ENCODE measurements at regions of chr10 and their contacts with region 1.

Region 1: DNA sequence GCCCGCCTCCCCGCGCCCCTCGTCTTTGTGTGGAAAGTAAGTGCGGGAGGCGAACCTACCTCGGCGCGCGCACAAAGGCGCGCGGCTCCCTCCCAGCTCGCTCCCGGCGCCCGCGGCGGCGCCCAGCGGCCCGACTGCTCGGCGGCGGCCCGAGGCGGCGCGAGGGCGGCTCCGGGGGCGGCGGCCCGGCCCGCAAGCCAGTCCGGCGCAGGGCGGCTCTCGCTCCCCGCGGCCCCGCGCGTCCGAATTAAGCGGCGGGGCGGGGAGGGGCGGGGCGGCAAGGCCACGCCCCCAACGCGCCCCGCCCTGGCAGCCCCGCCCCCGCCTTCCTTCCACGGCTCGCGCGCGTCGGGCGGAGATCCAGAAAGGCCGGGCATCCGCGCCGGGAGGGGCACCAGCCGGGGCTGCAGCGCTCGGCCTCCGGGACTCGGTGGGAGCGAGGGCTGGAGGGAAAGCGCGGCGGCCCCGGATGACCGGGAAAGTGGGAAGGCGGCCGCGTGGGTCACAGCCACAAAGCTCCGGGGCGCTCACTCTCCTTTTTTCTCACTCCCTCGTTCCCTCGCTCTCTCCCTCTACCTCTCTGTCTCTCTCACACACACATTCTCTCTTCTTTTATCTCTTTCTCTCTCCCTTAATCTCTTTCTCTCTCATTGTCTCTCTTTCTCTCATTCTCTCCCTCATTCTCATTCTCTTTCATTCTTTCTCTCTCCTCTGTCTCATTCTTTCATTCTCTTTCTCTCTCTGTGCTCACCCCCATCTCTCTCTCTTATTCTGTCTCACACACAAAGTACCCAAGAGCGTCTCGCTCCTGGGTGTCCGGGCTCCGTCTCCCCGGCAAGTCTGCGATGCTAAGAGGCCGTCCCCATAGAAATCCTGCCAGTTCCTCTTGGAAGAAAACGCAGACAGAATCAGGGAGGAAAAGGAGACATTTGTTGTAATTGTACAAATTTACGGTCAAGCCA is 170.2 kb downstream of the FAM107B start:
- DNase-seq: peak; percentile 69
- ATAC-seq: peak; percentile 59
- H3K4me3 ChIP-seq: peak overlapping the region; percentile 79
- H3K27ac ChIP-seq: peak overlapping the region; percentile 91
- H3K4me1 ChIP-seq: peaks cover 15% of the 10 kb centered on the region
- H3K27me3 ChIP-seq: no peaks in the 10 kb centered on the region
- CTCF ChIP-seq: no peak

Region 2: GRCh38 chr10:14554491-14555205 is 49.8 kb before region 1 on chr10:
- CTCF ChIA-PET with region 1: no interaction called
- POLR2A ChIA-PET with region 1: interaction called, 13 read pairs
- intact Hi-C with region 1: no loop called
- DNase-seq: peak; percentile 55
- ATAC-seq: peak; percentile 29
- H3K4me3 ChIP-seq: peak overlapping the region; percentile 39; the same call in 1 of the 2 replicates
- H3K27ac ChIP-seq: peak overlapping the region; percentile 93
- H3K4me1 ChIP-seq: peaks cover 51% of the 10 kb centered on the region
- H3K27me3 ChIP-seq: no peaks in the 10 kb centered on the region
- CTCF ChIP-seq: no peak

Region 3: DNA sequence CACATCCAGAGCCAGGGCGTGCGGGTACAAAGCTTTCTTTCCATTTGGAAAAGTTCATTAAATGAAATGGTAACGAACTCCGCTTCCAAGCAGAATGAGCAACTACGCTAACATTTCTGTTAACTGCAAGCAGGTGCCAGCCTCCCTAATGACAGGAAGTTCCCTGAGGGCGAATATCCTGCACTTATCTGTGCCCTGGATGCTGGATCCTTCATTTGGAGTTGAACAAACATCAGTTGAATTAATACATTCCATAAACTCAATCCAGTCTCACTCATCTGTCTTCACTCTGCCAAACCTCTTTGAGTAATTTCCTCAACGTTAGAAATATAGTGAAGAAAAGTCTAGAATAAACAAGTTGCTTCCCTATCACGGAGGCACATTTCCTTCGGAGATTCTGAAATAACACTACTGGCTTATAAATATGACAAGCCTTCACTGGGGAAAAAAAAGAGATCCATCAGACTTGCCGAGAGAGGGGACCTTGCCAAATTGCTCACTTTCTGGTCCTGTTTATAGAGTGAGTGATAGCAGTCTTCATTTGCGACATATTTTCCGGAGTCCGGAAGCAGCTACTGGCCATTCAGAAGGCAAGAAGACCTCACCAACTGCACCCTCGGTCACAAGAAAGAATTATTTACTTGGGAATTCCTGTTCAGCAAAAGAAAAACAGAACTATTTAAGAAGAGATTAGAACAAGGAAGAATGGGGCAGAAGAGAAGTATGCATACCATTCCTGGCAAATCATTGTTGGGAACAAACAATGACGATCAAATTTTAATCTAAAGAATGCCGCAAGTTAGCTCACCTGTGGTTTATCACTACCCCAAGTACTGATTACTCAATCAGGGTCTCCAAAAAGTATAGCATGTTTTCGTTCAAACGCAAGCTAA is 26.2 kb before region 1 on chr10:
- CTCF ChIA-PET with region 1: no interaction called
- POLR2A ChIA-PET with region 1: no interaction called
- intact Hi-C with region 1: loop called (anchors 2 kb)
- DNase-seq: peak; percentile 83
- ATAC-seq: peak; percentile 68
- H3K4me3 ChIP-seq: peak overlapping the region; percentile 54
- H3K27ac ChIP-seq: peak overlapping the region; percentile 94
- H3K4me1 ChIP-seq: peaks cover 53% of the 10 kb centered on the region
- H3K27me3 ChIP-seq: no peaks in the 10 kb centered on the region
- CTCF ChIP-seq: no peak

Region 4: DNA sequence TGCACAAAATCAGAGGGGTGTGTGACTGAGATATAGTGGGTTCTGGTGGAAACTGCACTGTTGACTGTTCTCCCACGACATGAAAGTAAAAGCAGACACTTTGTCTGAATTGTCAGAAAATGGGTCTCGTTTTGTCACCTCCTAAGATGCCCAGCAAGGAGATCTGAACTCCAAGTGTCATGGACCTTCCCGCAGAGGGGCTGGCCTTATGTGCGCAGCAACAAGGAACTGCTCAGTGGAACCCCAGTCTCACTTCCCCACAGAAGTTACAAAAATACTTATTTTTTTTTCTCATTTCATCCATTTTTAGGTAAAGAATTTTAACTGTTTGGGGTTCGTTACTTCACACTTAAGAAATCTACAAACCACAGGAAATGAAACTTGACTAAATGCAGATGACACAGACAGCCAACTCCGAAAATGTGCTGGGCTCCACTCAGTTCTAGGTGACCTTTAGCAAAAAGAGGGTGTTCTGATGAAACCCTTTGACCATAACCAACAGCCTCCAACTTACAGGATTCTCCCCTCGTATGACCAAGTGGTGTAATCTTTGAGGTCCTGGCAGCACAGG is 55.2 kb after region 1 on chr10:
- CTCF ChIA-PET with region 1: no interaction called
- POLR2A ChIA-PET with region 1: no interaction called
- intact Hi-C with region 1: loop called (anchors 1 kb)
- DNase-seq: no peak
- ATAC-seq: no peak
- H3K4me3 ChIP-seq: no peak overlapping the region
- H3K27ac ChIP-seq: peak overlapping the region; percentile 97
- H3K4me1 ChIP-seq: peaks cover 26% of the 10 kb centered on the region
- H3K27me3 ChIP-seq: no peaks in the 10 kb centered on the region
- CTCF ChIP-seq: no peak

Region 5: GRCh38 chr10:14822879-14823755 is 218.7 kb after region 1 on chr10:
- CTCF ChIA-PET with region 1: no interaction called
- POLR2A ChIA-PET with region 1: interaction called, 5 read pairs
- intact Hi-C with region 1: loop called (anchors 2 kb)
- DNase-seq: peak; percentile 60
- ATAC-seq: peak; percentile 60
- H3K4me3 ChIP-seq: no peak overlapping the region
- H3K27ac ChIP-seq: no peak overlapping the region
- H3K4me1 ChIP-seq: peaks cover 19% of the 10 kb centered on the region
- H3K27me3 ChIP-seq: no peaks in the 10 kb centered on the region
- CTCF ChIP-seq: peak; percentile 70